Heart left ventricle (tissue), 16 donors: ENCODE measurements at regions of chr10 and their contacts with region 1.

Region 1: DNA sequence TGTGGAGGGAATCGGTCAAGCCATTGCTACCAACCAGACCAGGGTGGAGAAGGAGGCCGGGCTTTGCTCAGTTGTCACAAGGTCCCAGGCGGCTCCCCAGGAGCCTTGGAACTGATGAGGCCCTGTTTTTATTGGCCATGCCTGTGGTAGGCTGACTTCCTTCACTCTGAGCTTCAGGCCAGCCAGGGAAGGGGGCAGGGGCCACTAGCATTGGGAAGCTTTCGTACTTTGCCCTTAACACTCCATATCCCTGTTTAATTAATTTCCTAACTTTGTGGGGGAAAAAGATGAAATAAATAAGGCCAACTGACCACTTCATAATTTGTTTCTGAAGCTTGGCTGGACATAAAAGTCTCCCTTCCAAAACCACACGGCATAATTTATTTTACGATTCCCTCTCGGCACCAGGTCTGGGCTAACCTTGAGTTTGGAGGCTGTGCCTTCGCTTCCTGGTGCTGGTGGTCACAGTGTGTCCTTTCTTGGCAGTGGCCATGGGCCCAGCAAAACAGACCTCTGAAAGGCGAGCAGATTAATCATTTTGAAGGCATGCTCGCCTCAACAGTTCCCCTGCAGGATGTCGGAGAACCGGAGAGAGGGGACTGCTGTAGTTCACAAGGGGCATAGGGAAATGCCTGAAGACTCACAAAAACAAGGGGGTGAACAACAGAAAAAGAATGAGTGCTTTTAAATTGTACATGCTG is 965.9 kb downstream of the LRMDA start:
- DNase-seq: peak; percentile 21 to 76 (median 46)
- ATAC-seq: peak in 3 of 4 donors; percentile 53 to 67 (median 64)
- H3K4me3 ChIP-seq: no peak overlapping the region
- H3K27ac ChIP-seq: peak overlapping the region; percentile 24 to 72 (median 54)
- H3K4me1 ChIP-seq: peaks cover 0 to 37% (median 16%) of the 10 kb centered on the region in 12 donors
- H3K27me3 ChIP-seq: no peaks in the 10 kb centered on the region
- CTCF ChIP-seq: no peak
- POLR2A ChIP-seq: no peak

Region 2: GRCh38 chr10:76257816-76258215 is 139.5 kb before region 1 on chr10:
- intact Hi-C with region 1: no loop called
- DNase-seq: no peak
- ATAC-seq: no peak
- H3K4me3 ChIP-seq: no peak overlapping the region
- H3K27ac ChIP-seq: no peak overlapping the region
- H3K4me1 ChIP-seq: no peaks in the 10 kb centered on the region
- H3K27me3 ChIP-seq: no peaks in the 10 kb centered on the region
- CTCF ChIP-seq: no peak
- POLR2A ChIP-seq: no peak

Region 3: GRCh38 chr10:76336213-76336963 is 60.9 kb before region 1 on chr10:
- intact Hi-C with region 1: loop called in 1 of 10 experiments (anchors 10 kb)
- DNase-seq: peak in 3 of 5 donors; percentile 30 to 51 (median 43)
- ATAC-seq: peak in 3 of 4 donors; percentile 70 to 84 (median 72)
- H3K4me3 ChIP-seq: no peak overlapping the region
- H3K27ac ChIP-seq: peak overlapping the region in 9 of 12 donors; percentile 8 to 79 (median 39)
- H3K4me1 ChIP-seq: peaks cover 0 to 23% (median 6%) of the 10 kb centered on the region in 12 donors
- H3K27me3 ChIP-seq: no peaks in the 10 kb centered on the region
- CTCF ChIP-seq: no peak
- POLR2A ChIP-seq: no peak

Region 4: DNA sequence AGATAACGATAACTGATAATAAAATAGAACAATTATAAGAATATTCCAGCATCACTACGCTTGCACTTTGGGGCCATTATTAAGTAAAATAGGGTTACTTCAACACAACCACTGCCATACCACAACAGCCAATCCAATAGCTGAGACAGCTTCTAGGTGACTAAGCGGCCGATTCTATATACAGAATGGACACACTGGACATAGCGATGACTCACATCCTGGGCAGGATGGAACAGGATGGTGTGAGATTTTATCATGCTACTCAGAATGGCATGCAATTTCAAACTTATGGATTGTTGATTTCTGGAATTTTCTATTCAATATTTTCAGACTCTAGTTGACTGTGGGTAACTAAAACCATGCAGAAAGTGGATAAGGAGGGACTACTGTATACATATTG is 45.0 kb before region 1 on chr10:
- intact Hi-C with region 1: no loop called
- DNase-seq: no peak
- ATAC-seq: no peak
- H3K4me3 ChIP-seq: no peak overlapping the region
- H3K27ac ChIP-seq: peak overlapping the region in 1 of 12 donors; percentile 46
- H3K4me1 ChIP-seq: no peaks in the 10 kb centered on the region
- H3K27me3 ChIP-seq: no peaks in the 10 kb centered on the region
- CTCF ChIP-seq: no peak
- POLR2A ChIP-seq: no peak